ENCODE measurements at regions of chr12 and their contacts with region 1.

Region 1: GRCh38 chr12:109858764-109859163 is 21.6 kb downstream of the GLTP start:
- DNase-seq: no peak
- ATAC-seq: no peak
- H3K4me3 ChIP-seq: no peak overlapping the region
- H3K4me3 Mint-ChIP-seq: no peak overlapping the region
- H3K27ac ChIP-seq: no peak overlapping the region
- H3K27ac Mint-ChIP-seq: peak overlapping the region; percentile 46 to 69
- H3K4me1 ChIP-seq: peaks cover 8% of the 10 kb centered on the region
- H3K4me1 Mint-ChIP-seq: peaks cover 15 to 21% of the 10 kb centered on the region in 2 donors
- H3K27me3 ChIP-seq: no peaks in the 10 kb centered on the region
- H3K27me3 Mint-ChIP-seq: no peaks in the 10 kb centered on the region
- CTCF ChIP-seq: no peak

Region 2: DNA sequence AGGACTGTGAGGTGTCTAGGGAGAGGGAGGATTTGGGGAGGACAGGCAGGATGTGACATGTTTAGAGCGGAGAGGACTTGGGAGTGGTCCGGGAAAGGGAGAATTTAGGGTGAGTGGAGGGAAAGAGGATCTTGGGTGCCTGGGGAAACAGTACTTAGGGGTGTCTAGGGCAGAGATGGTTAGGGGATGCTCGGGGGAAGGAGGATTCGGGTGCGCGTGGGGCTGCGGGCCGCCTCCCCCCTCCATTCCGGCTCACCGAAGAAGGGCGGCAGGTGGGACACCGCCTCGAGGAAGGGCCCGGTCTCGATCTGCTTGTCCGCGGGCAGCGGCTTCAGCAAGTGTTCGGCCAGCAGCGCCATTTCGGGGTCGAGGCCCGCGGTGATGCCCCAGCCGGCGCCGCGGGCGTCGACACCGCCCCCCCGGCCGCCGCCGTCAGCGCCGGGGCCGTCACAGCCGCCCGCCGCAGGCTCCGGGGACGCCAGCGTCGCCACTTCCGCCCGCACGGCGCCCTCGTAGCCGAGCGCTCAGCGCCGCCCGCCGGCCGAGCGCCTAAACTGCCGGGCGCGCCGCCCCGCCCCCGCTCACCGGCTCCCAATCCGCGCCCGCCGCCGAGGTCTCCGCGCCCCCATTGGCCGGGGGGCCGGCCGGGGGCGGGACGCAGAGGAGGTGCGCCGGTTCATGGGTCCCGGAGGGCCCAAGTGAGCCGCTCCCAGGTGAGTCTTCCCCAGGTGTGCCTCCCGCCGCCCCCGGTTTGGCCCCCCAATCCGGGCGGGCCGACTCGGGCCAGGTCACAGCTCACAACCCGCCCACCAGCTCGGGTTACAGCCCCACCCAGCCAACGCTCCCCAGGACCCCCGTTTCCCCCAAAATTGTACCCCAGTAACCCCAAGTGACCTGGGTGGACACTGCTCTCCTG is 21.5 kb after region 1 on chr12 and contains the start of gene GLTP:
- intact Hi-C with region 1: loop called (anchors 1 kb)
- DNase-seq: peak; percentile 92 to 96
- ATAC-seq: peak; percentile 96 to 99 (median 96)
- H3K4me3 ChIP-seq: peak within 1 kb of the TSS; percentile 96
- H3K4me3 Mint-ChIP-seq: peak within 1 kb of the TSS; percentile 95
- H3K27ac ChIP-seq: peak within 1 kb of the TSS; percentile 95
- H3K27ac Mint-ChIP-seq: peak within 1 kb of the TSS; percentile 80 to 97
- H3K4me1 ChIP-seq: peaks cover 42% of the 10 kb centered on the region
- H3K4me1 Mint-ChIP-seq: peaks cover 48 to 55% of the 10 kb centered on the region in 2 donors
- H3K27me3 ChIP-seq: no peaks in the 10 kb centered on the region
- H3K27me3 Mint-ChIP-seq: no peaks in the 10 kb centered on the region
- CTCF ChIP-seq: peak; percentile 57
- total RNA-seq, gene GLTP: 48.6 to 52.8 (median 49.2) TPM

Region 3: GRCh38 chr12:109899783-109900751 is 41.3 kb after region 1 on chr12 and contains the start of gene TCHP:
- intact Hi-C with region 1: loop called (anchors 1 kb)
- DNase-seq: peak; percentile 60 to 91
- ATAC-seq: peak; percentile 88 to 94 (median 92)
- H3K4me3 ChIP-seq: peak within 1 kb of the TSS; percentile 77
- H3K4me3 Mint-ChIP-seq: peak within 1 kb of the TSS; percentile 99
- H3K27ac ChIP-seq: peak within 1 kb of the TSS; percentile 78
- H3K27ac Mint-ChIP-seq: peak within 1 kb of the TSS; percentile 95 to 96
- H3K4me1 ChIP-seq: peaks cover 24% of the 10 kb centered on the region
- H3K4me1 Mint-ChIP-seq: peaks cover 25 to 31% of the 10 kb centered on the region in 2 donors
- H3K27me3 ChIP-seq: no peaks in the 10 kb centered on the region
- H3K27me3 Mint-ChIP-seq: no peaks in the 10 kb centered on the region
- CTCF ChIP-seq: no peak
- total RNA-seq, gene TCHP: 33.7 to 42.5 (median 38.7) TPM

Region 4: DNA sequence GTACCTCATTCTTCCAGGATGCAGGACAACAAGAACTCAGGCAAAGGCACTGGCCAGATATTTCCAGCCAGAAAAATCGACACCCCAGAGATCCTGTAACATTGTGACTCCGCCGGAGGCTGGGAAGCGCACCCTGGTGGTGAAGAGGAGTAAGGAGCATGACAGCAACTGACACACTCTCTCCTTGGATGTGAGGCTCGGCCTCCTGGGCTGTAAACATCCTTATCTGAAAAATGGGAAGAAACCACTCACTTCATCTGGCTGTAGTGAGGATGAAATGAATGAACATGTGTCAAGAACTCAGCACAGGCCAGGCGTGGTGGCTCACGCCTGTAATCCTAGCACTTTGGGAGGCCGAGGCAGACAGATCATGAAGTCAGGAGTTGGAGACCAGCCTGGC is 68.9 kb after region 1 on chr12:
- intact Hi-C with region 1: loop called (anchors 1 kb)
- DNase-seq: peak; percentile 23 to 66
- ATAC-seq: peak; percentile 56 to 82 (median 67)
- H3K4me3 ChIP-seq: no peak overlapping the region
- H3K4me3 Mint-ChIP-seq: no peak overlapping the region
- H3K27ac ChIP-seq: no peak overlapping the region
- H3K27ac Mint-ChIP-seq: peak overlapping the region; percentile 36 to 60
- H3K4me1 ChIP-seq: no peaks in the 10 kb centered on the region
- H3K4me1 Mint-ChIP-seq: peaks cover 0 to 6% of the 10 kb centered on the region in 2 donors
- H3K27me3 ChIP-seq: no peaks in the 10 kb centered on the region
- H3K27me3 Mint-ChIP-seq: no peaks in the 10 kb centered on the region
- CTCF ChIP-seq: peak; percentile 40

Region 5: GRCh38 chr12:110458756-110459155 is 600.0 kb after region 1 on chr12:
- intact Hi-C with region 1: no loop called
- DNase-seq: no peak
- ATAC-seq: no peak
- H3K4me3 ChIP-seq: no peak overlapping the region
- H3K4me3 Mint-ChIP-seq: no peak overlapping the region
- H3K27ac ChIP-seq: no peak overlapping the region
- H3K27ac Mint-ChIP-seq: no peak overlapping the region
- H3K4me1 ChIP-seq: no peaks in the 10 kb centered on the region
- H3K4me1 Mint-ChIP-seq: peaks cover 0 to 5% of the 10 kb centered on the region in 2 donors
- H3K27me3 ChIP-seq: no peaks in the 10 kb centered on the region
- H3K27me3 Mint-ChIP-seq: no peaks in the 10 kb centered on the region
- CTCF ChIP-seq: no peak